Activated B cell treated with CpG ODN at 0.5 μM for 24 hours (primary cell): ENCODE measurements at regions of chr5 and their contacts with region 1.

Region 1: DNA sequence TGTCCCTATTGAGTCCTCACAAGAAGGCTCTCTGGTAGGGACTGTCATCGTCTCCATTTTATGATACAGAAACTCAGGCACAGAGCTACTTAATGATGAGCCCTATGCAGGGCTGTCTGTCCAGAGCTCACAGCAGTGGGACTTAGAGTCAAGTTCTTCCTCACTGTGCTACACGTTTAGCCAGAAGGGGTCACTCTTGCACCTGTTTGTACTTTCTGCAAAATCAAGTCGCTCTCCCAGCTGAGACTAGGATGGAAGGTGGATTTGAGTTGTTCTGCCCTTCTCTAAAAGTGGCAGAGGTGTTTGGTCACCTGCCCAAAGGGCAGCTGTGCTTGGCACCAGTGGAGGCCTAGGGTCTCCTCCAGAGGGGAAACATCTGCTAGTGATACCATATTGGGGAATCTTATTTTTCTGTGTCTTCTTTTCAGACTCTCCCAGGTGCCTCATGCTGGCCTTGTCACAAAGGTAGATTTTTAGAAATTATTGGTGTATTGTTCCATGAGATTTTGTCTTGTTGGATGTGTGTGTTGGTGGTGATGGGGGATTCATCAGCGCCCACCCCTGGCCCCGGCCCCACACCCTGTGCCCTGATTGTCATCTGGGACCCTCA is 104.2 kb downstream of the PPARGC1B start:
- DNase-seq: no peak
- ATAC-seq: peak; percentile 26
- H3K4me3 Mint-ChIP-seq: no peak overlapping the region
- H3K27ac Mint-ChIP-seq: no peak overlapping the region
- H3K4me1 Mint-ChIP-seq: peaks cover 8% of the 10 kb centered on the region
- H3K27me3 Mint-ChIP-seq: no peaks in the 10 kb centered on the region
- CTCF ChIP-seq: no peak

Region 2: DNA sequence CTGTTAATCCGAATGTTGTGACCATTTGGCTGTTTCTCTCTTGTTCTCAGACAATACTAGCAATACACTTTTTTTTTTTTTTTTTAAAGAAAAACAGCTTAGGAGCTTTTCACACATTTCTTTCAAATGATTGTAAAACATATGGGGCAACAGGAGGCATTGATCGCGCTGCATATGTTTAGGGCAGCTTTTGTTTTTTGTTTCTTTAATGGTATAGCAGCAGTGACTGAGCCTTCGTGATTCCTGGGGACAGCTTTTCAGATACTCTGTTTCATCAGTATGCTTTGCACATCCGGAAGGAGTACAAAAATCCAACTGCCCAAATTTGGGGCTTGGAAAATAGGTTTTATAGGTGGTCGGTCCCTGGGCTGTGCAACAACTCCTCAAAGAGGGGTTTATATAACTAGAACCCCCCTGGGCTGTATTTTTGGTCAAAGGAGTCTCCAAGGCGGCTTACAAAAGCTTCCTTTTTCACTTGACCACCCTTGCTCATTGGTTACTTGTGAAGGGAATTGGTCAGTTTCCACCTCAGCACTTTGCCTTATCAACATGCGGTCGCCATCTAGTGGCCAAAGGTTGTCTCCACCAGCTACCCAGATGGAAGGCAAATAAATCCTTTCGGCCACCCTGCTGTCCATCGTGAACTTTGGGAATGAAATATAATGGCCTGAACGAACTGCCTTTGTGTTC is 18.4 kb after region 1 on chr5:
- CTCF ChIA-PET with region 1: interaction called, 121 read pairs
- POLR2A ChIA-PET with region 1: interaction called, 5 read pairs
- intact Hi-C with region 1: loop called (anchors 1 kb)
- DNase-seq: peak; percentile 29
- ATAC-seq: peak; percentile 25
- H3K4me3 Mint-ChIP-seq: no peak overlapping the region
- H3K27ac Mint-ChIP-seq: no peak overlapping the region
- H3K4me1 Mint-ChIP-seq: no peaks in the 10 kb centered on the region
- H3K27me3 Mint-ChIP-seq: no peaks in the 10 kb centered on the region
- CTCF ChIP-seq: peak; percentile 20

Region 3: GRCh38 chr5:149990518-149991376 is 156.4 kb after region 1 on chr5:
- CTCF ChIA-PET with region 1: interaction called, 92 read pairs
- POLR2A ChIA-PET with region 1: no interaction called
- intact Hi-C with region 1: loop called (anchors 1 kb)
- DNase-seq: peak; percentile 34
- ATAC-seq: peak; percentile 99
- H3K4me3 Mint-ChIP-seq: no peak overlapping the region
- H3K27ac Mint-ChIP-seq: no peak overlapping the region
- H3K4me1 Mint-ChIP-seq: no peaks in the 10 kb centered on the region
- H3K27me3 Mint-ChIP-seq: no peaks in the 10 kb centered on the region
- CTCF ChIP-seq: peak; percentile 95

Region 4: GRCh38 chr5:150217873-150218692 is 383.7 kb after region 1 on chr5:
- CTCF ChIA-PET with region 1: interaction called, 7 read pairs
- POLR2A ChIA-PET with region 1: no interaction called
- intact Hi-C with region 1: loop called (anchors 1 kb)
- DNase-seq: peak; percentile 66
- ATAC-seq: peak; percentile 96
- H3K4me3 Mint-ChIP-seq: no peak overlapping the region
- H3K27ac Mint-ChIP-seq: no peak overlapping the region
- H3K4me1 Mint-ChIP-seq: peaks cover 1% of the 10 kb centered on the region
- H3K27me3 Mint-ChIP-seq: peaks cover 15% of the 10 kb centered on the region
- CTCF ChIP-seq: no peak

Region 5: DNA sequence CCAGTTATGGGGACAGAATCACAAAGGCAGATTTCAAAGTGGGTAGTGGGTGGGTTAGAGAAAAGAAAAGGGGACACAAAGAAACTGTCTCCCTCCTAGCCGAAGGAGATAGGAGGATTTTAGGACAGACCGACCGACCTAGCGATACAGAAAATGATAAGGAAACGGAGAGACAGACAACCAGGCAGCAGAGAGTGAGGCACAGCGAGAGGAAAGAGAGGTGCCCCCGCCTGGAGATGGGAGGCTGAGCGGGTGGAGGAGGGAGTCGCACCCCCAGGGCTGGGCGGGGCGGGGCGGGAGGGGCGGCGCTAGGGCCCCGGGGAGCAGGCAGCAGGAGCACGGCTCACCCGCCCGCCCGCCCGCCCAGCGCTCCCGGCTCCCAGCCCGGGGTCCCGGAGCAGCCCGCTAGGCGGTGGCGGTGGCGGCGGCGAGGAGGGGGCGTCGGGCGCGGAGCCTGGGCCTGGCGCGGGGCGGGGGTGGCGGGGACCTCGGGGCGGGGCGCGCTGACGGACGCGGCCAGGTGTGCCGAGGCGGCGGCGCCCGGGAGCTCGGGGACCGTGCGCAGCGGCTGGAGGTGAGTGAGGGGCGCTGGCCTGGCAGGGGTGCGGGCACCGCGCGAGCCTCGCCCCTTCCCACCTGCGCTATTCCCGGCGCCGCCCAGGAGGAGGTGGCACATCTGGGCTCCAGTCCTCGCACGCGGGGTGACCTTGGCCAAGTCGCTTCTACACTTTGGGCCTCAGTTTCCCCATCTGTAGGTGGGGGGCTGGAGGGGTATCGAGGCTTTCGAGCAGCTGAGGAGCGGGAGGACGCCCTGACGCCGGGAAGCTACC is 790.2 kb after region 1 on chr5:
- CTCF ChIA-PET with region 1: no interaction called
- POLR2A ChIA-PET with region 1: no interaction called
- intact Hi-C with region 1: loop called (anchors 5 kb)
- DNase-seq: peak; percentile 44
- ATAC-seq: peak; percentile 23
- H3K4me3 Mint-ChIP-seq: peak overlapping the region; percentile 94
- H3K27ac Mint-ChIP-seq: peak overlapping the region; percentile 76
- H3K4me1 Mint-ChIP-seq: peaks cover 57% of the 10 kb centered on the region
- H3K27me3 Mint-ChIP-seq: no peaks in the 10 kb centered on the region
- CTCF ChIP-seq: no peak